Keratinocyte (primary cell): ENCODE measurements at regions of chr1 and their contacts with region 1.

Region 1: GRCh38 chr1:181166377-181167196 is 78.1 kb downstream of the IER5 start:
- DNase-seq: no peak
- H3K4me3 ChIP-seq: no peak overlapping the region
- H3K27ac ChIP-seq: no peak overlapping the region
- H3K4me1 ChIP-seq: no peaks in the 10 kb centered on the region
- H3K27me3 ChIP-seq: no peaks in the 10 kb centered on the region
- CTCF ChIP-seq: peak; percentile 79 to 89 (median 81)

Region 2: GRCh38 chr1:181089677-181090409 is 76.7 kb before region 1 on chr1:
- dilution Hi-C with region 1: loop called (anchors 5 kb)
- DNase-seq: no peak
- H3K4me3 ChIP-seq: peak overlapping the region; percentile 81 to 96 (median 89)
- H3K27ac ChIP-seq: peak overlapping the region; percentile 96
- H3K4me1 ChIP-seq: peaks cover 33% of the 10 kb centered on the region
- H3K27me3 ChIP-seq: no peaks in the 10 kb centered on the region
- CTCF ChIP-seq: no peak

Region 3: DNA sequence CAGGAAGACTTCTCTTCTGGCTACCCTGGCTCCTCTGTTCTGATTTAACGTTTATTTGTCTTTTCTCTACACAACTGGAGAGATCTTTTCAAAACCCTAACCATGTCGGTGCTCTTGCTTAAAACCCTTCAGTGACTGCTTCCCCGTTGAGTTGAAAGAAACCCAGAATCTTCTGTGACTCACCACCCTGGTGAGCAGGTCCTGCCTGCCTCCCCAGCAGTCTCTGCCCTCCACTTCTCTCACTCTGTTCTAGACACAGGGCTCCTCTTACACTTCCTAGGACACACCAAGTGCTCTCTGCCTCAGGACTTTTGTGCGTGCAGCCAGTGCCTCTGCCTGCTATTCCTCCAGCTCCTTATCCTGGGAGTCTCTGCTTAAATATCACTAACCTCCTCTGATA is 53.4 kb after region 1 on chr1:
- dilution Hi-C with region 1: no loop called
- DNase-seq: no peak
- H3K4me3 ChIP-seq: no peak overlapping the region
- H3K27ac ChIP-seq: no peak overlapping the region
- H3K4me1 ChIP-seq: no peaks in the 10 kb centered on the region
- H3K27me3 ChIP-seq: no peaks in the 10 kb centered on the region
- CTCF ChIP-seq: no peak